Prostate gland (tissue), 2 donors: ENCODE measurements at regions of chr2 and their contacts with region 1.

Region 1: DNA sequence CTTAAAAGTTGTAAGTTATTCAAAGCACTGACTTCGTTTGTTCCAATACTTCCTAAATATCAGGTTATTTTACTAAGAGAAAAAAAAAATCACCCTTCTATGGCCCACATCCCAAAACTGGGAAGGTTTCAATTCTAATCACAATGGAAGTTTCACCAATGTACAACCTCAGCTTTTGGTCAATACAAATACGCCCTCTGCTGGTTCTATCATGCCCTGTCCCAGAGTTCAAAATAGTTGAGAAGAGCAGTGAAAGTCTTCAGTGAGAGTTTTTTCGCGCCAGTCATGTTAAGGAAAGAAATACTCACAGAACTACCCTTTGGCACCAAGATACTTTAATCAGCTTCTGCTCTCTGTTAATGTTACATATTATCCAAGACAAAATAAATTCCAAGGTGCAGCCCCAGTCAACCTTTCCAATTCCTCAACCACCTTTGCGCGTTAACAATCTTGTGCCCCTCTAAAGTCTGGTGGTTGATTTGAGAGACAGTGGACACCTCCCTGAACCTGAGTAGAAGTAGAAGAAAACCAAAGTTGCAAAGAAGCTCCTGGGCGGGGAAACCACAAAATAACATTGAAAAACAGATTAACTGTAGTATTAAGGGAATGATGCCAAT is 59.9 kb downstream of the SUMO1 start:
- DNase-seq: peak; percentile 62
- H3K4me3 ChIP-seq: no peak overlapping the region
- H3K27ac ChIP-seq: no peak overlapping the region
- H3K4me1 ChIP-seq: no peaks in the 10 kb centered on the region
- H3K27me3 ChIP-seq: no peaks in the 10 kb centered on the region
- CTCF ChIP-seq: peak; percentile 78 to 86 (median 80)
- POLR2A ChIP-seq: no peak

Region 2: DNA sequence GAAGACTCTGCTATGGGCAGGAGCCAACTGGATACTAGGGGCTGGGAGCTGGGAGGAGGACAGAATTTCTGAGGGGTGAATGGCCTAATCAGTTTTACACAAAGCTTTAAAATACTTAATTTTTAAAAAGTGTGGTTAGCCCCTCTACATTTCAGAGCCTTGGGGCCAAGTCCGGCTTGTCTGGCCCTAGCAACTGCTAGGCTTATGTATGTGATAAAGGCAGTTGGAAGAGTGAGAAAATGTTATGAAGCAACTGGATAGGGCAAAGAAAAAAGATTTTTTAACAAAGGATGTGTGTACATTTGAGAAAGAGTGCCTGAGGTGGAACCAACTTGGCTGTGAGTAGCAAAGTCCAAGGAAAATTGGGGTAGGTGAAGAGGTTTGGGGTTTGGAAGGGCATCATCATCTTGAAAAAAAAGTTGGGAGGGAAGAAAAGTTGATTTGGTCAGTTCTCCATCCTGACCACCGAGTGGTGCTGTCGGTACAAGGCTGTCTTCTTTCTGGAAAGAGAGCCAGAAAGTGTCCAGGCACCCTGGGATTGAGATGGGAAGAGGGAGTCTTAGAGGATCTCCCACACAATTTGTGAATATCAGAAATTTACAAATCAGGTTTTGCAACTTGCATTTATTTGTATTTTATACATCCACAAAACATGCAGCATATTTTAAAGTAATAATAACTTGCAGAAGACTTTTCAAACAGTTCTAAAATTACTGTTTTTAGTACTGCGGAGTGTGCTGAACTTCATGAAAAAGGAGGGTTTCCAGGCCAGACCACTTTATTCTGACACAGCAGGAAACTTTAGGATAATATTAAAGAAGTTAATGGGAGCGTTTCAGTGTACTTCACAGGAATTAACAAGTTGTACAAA is 382.6 kb before region 1 on chr2:
- intact Hi-C with region 1: loop called (anchors 5 kb)
- DNase-seq: no peak
- H3K4me3 ChIP-seq: no peak overlapping the region
- H3K27ac ChIP-seq: no peak overlapping the region
- H3K4me1 ChIP-seq: no peaks in the 10 kb centered on the region
- H3K27me3 ChIP-seq: no peaks in the 10 kb centered on the region
- CTCF ChIP-seq: peak in 2 of 4 experiments; percentile 46 to 68
- POLR2A ChIP-seq: no peak

Region 3: DNA sequence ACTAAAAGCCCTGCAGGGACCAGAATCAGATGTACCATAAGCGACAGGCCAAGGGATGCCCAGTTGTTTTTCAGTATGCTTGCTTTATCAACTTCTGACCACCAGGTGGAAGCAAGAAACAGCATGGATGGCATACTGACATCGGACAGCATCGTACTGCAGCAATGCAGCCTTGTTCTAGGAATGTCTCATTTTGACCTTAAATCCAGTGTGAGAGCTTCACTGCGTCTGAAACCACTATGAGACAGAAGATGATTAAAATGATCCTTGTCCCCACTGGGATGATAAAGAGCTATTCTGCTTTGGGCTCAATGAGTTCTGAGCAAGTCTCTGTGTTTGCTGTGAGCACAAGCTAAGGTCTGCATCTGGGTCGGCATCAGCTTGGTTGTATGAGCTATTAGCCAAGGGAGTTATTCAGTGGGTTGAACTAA is 317.8 kb before region 1 on chr2:
- intact Hi-C with region 1: loop called (anchors 1 kb)
- DNase-seq: peak; percentile 59
- H3K4me3 ChIP-seq: no peak overlapping the region
- H3K27ac ChIP-seq: no peak overlapping the region
- H3K4me1 ChIP-seq: no peaks in the 10 kb centered on the region
- H3K27me3 ChIP-seq: peaks cover 3% of the 10 kb centered on the region
- CTCF ChIP-seq: peak; percentile 64 to 89 (median 84)
- POLR2A ChIP-seq: no peak

Region 4: DNA sequence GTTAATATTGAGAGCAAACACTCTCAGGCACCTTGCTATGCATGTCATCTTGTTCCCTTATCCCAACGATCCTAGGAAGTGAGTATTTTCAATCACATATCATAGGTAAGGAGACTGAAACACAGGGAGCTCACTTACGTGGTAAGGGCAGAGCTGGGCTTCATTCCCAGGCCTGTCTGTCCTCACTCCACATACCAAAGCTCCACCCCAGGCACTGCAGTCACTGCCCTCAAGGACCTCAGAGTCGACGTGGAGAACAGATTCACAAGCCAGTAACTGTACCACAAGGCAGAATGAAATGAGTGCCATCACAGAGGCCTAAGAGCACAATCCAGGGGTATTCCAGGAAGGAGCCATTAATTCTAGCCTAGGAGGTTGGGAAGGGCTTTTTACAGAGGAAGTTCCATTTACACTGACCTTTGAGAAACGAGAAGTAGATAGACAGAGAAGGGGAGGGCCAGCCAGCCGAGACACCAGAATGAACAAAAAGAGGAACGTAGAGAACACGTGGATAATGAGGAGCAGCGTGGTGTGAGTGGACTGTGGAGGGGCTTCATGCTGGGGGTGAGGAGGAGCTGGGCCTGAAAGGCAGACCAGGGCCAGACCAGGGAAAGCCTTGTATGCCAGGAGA is 56.8 kb before region 1 on chr2:
- intact Hi-C with region 1: no loop called
- DNase-seq: no peak
- H3K4me3 ChIP-seq: no peak overlapping the region
- H3K27ac ChIP-seq: no peak overlapping the region
- H3K4me1 ChIP-seq: no peaks in the 10 kb centered on the region
- H3K27me3 ChIP-seq: no peaks in the 10 kb centered on the region
- CTCF ChIP-seq: no peak
- POLR2A ChIP-seq: no peak